ENCODE measurements at regions of chr17 and their contacts with region 1.

Region 1: DNA sequence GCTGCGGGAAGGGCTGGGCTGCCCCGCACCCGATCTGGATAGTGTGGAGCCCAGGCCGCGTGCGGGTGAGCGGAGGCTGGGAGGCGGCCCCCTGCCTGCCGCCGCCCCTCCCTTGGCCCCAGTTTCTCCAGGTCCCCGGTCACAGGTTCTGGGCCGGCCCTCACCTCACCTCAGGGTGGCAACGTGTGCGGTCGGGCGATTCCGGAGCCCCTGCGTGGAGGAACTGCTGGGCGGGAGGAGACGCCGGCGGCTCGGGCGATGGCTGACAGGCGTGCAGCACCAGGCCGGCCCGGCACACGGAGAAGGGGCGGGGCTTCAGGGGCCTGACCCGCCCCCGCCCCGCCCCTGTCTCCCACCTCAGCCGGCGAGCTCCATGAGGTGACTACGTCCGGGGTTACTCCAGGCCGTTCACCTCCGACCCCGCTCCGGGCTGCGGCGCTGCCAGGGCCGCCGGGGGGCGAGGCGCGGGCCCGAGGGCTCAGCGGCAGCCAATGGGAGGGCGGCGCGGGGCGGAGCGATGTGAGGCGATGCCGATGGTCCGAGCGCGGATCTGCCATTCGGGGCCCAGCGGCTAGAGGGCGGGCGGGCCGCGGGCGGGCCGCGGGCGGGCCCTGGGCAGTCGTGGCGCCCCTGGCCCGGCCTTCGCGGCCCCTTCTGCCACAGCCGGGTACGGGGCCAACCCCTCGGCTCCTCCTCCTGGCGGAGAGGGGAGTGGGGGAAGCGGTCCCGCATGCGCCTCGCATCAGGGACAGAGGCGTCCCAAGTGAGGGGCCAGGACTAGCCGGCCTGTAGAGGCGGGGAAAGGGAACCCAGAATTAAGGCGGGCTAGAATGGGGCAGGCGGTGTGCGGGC is 16.7 kb upstream of the C17orf78 start:
- DNase-seq: peak; percentile 80
- ATAC-seq: peak; percentile 95
- H3K4me3 ChIP-seq: peak overlapping the region; percentile 78
- H3K27ac ChIP-seq: peak overlapping the region; percentile 71
- H3K4me1 ChIP-seq: peaks cover 12% of the 10 kb centered on the region
- H3K27me3 ChIP-seq: no peaks in the 10 kb centered on the region
- CTCF ChIP-seq: 0 out of 6 replicates have a peak, but pooled peaks of 1 of the 3 experiments have one; percentile 10
- EP300 ChIP-seq: no peak
- POLR2A ChIP-seq: peak; percentile 79
- RAD21 ChIP-seq: no peak

Region 2: GRCh38 chr17:36948717-36949460 is 410.2 kb before region 1 on chr17 and contains the start of gene AATF:
- CTCF ChIA-PET with region 1: no interaction called
- POLR2A ChIA-PET with region 1: no interaction called
- RAD21 ChIA-PET with region 1: no interaction called
- SMC1A ChIA-PET with region 1: no interaction called
- in situ Hi-C with region 1: no loop called
- intact Hi-C with region 1: loop called (anchors 10 kb)
- DNase-seq: peak; percentile 94
- ATAC-seq: peak; percentile 96
- H3K4me3 ChIP-seq: peak within 1 kb of the TSS; percentile 91
- H3K27ac ChIP-seq: peak within 1 kb of the TSS; percentile 90
- H3K4me1 ChIP-seq: peaks cover 14% of the 10 kb centered on the region
- H3K27me3 ChIP-seq: peaks cover 8 to 20% of the 10 kb centered on the region in 2 experiments
- CTCF ChIP-seq: no peak
- EP300 ChIP-seq: no peak
- POLR2A ChIP-seq: peak; percentile 97
- RAD21 ChIP-seq: no peak
- polyA plus RNA-seq, gene AATF: 36.8 to 48.0 TPM

Measured in GM12878 (cell line).